A549 (cell line): ENCODE measurements at regions of chr20 and their contacts with region 1.

Region 1: DNA sequence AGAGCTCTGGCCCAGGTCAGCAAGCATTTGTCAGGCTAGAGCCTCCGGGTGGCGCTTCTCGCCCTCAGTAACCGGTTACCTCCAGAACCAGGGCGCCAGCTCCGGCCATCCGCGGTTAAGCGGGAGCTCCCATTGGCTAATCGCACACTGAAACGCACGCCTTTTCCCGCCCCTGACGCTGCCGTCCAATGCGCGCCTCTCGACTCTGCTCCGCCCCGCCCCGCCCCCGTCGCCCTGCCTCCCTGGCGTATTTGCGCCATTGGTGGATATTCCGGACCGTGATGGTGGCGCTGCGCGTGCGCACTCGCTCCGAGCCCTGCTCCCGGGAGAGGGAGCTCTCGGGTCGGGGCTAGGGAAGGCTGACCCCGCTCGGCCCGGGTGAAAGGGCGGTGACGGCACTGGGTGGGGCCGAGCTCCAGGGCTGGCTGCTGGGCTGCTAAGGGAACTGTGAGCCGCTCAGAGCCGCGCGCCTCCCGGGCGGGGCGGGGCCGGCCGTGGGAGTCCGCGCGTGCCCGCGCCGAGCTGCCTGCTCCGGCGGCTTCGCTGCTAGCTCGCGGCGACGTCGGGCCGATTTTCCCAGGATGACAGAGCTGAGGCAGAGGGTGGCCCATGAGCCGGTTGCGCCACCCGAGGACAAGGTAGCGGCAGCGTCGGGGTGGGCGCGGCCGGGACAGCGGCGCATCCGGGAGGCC is at the start of gene CDS2:
- DNase-seq: peak; percentile 98 to 100
- ATAC-seq: peak; percentile 92 to 95
- H3K4me3 ChIP-seq: peak within 1 kb of the TSS; percentile 78
- H3K27ac ChIP-seq: peak within 1 kb of the TSS; percentile 85 to 98
- H3K4me1 ChIP-seq: peaks cover 10% of the 10 kb centered on the region; the same call in 2 of the 3 replicates
- CTCF ChIP-seq: peak; percentile 75
- EP300 ChIP-seq: no peak
- POLR2A ChIP-seq: peak; percentile 74
- RAD21 ChIP-seq: peak; percentile 81 to 87
- polyA plus RNA-seq, gene CDS2: 106 and 128 TPM in 2 replicates

Region 2: GRCh38 chr20:5168651-5169396 is 42.2 kb after region 1 on chr20:
- CTCF ChIA-PET with region 1: interaction called, 25 read pairs
- POLR2A ChIA-PET with region 1: interaction called, 3 read pairs
- DNase-seq: no peak
- ATAC-seq: peak; percentile 69 to 71; a peak in 4 of 6 replicates
- H3K4me3 ChIP-seq: no peak overlapping the region
- H3K27ac ChIP-seq: peak overlapping the region in 1 of 2 experiments; percentile 10; a peak in 2 of 6 replicates
- H3K4me1 ChIP-seq: peaks cover 16% of the 10 kb centered on the region
- CTCF ChIP-seq: no peak
- EP300 ChIP-seq: no peak
- POLR2A ChIP-seq: no peak
- RAD21 ChIP-seq: no peak

Region 3: GRCh38 chr20:5181956-5182355 is 55.3 kb after region 1 on chr20:
- CTCF ChIA-PET with region 1: interaction called, 47 read pairs
- POLR2A ChIA-PET with region 1: interaction called, 4 read pairs
- DNase-seq: peak in 1 of 2 experiments; percentile 22
- ATAC-seq: no peak
- H3K4me3 ChIP-seq: no peak overlapping the region
- H3K27ac ChIP-seq: no peak overlapping the region
- H3K4me1 ChIP-seq: 0 out of 3 replicates have a peak, but pooled peaks cover 10% of the 10 kb centered on the region
- CTCF ChIP-seq: no peak
- EP300 ChIP-seq: no peak
- POLR2A ChIP-seq: no peak
- RAD21 ChIP-seq: no peak

Region 4: GRCh38 chr20:5222919-5223634 is 96.4 kb after region 1 on chr20:
- CTCF ChIA-PET with region 1: interaction called, 10 read pairs
- POLR2A ChIA-PET with region 1: no interaction called
- DNase-seq: peak; percentile 63 to 71
- ATAC-seq: peak; percentile 76 to 88; a peak in 4 of 6 replicates
- H3K4me3 ChIP-seq: no peak overlapping the region
- H3K27ac ChIP-seq: no peak overlapping the region
- H3K4me1 ChIP-seq: 0 out of 3 replicates have a peak, but pooled peaks cover 3% of the 10 kb centered on the region
- CTCF ChIP-seq: peak; percentile 92
- EP300 ChIP-seq: no peak
- POLR2A ChIP-seq: no peak
- RAD21 ChIP-seq: peak; percentile 61 to 83

Region 5: DNA sequence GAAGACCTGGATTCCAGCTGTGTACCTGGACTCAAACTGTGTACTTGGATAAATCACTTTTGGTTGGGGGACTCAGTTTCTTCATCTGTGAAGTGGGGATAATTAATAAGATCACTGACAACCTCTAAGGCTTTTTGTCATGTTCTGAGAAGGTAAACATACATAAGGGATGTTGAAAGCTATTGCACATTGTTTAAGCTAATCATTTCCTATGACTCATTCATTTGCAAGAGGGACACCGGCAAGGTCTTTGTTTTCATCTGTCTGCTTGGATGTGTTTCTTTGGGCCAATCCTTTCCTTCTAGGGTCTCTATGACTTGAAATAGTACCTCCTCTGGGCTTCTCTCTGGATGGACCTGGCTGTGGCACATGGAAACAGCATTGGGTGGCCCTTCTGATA is 183.3 kb after region 1 on chr20:
- CTCF ChIA-PET with region 1: no interaction called
- POLR2A ChIA-PET with region 1: no interaction called
- DNase-seq: no peak
- ATAC-seq: no peak
- H3K4me3 ChIP-seq: no peak overlapping the region
- H3K27ac ChIP-seq: no peak overlapping the region
- H3K4me1 ChIP-seq: no peaks in the 10 kb centered on the region
- CTCF ChIP-seq: no peak
- EP300 ChIP-seq: no peak
- POLR2A ChIP-seq: no peak
- RAD21 ChIP-seq: no peak